ENCODE measurements at regions of chr1 and their contacts with region 1.

Region 1: GRCh38 chr1:155729031-155729898 is 40.4 kb downstream of the DAP3 start:
- DNase-seq: no peak
- H3K4me3 ChIP-seq: no peak overlapping the region
- H3K27me3 ChIP-seq: no peaks in the 10 kb centered on the region
- CTCF ChIP-seq: peak; percentile 75

Region 2: GRCh38 chr1:155713075-155713474 is 16.2 kb before region 1 on chr1:
- CTCF ChIA-PET with region 1: interaction called, 12 read pairs
- POLR2A ChIA-PET with region 1: no interaction called
- DNase-seq: no peak
- H3K4me3 ChIP-seq: no peak overlapping the region
- H3K27me3 ChIP-seq: no peaks in the 10 kb centered on the region
- CTCF ChIP-seq: no peak

Region 3: GRCh38 chr1:155744711-155745283 is 15.5 kb after region 1 on chr1:
- CTCF ChIA-PET with region 1: interaction called, 14 read pairs
- POLR2A ChIA-PET with region 1: no interaction called
- DNase-seq: no peak
- H3K4me3 ChIP-seq: peak overlapping the region; percentile 53
- H3K27me3 ChIP-seq: no peaks in the 10 kb centered on the region
- CTCF ChIP-seq: no peak

Region 4: DNA sequence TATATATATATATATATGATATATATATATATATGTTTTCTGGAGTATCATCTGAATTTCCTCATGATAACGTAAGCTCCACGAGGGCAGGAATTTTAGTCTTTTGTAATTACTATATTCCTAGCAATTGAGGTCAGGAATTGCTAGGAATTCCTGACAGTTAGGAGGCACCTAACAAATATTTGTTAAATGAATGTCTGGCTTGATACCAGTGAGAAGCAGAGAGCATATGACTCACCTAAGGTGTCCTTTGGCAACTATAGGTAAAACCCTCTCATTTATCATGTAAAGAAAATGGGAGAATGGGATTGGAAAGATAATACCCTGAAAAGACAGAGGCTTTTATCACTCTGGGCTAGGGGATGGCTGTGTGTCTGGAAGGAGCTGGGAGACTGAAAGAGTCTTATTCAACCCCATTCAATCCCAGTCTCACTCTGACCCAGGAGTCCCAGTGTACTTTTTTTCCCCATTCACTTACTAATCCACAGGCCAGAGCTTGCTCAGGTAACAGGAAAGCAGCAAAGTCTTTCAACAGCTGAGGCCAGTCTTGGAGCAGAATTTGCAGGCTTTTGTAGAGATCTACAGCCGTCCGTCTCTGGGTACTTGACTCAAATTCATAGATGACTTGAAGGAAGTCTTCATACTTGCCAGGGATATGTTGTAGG is 30.8 kb after region 1 on chr1:
- CTCF ChIA-PET with region 1: no interaction called
- POLR2A ChIA-PET with region 1: no interaction called
- DNase-seq: no peak
- H3K4me3 ChIP-seq: no peak overlapping the region
- H3K27me3 ChIP-seq: no peaks in the 10 kb centered on the region
- CTCF ChIP-seq: no peak